ENCODE measurements at regions of chr6 and their contacts with region 1.

Region 1: DNA sequence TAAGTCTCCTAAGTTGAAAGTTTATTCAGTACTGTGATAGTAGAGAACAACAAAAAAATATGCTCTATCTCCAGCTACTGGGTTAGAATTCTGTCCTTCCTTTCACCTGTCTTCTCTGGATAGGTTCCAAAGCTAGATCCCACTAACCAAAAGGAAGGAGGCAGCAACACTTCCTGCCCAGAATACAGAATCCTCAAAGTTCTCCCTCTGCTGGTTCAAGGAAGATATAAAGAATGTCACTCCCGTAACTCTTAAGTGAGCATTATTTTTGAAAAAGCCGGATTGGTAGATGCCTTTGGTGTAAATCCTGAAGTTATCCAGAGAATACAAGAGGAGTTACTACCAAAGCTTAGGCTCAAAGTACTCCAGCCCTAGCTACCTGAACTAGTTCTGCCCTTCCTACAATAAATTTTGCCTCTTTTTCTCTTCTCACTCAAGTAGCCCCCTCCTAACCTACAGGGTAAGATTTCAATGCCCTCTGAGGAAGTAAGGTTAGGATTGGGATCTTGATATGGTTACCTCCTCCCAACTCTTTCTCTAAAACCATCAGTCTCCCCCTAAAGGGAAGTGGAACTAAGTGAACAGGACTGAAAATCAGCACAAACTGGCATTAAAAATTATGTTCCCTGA is 26.0 kb upstream of the CRIP3 start:
- DNase-seq: peak; percentile 12
- H3K4me3 ChIP-seq: no peak overlapping the region
- H3K27me3 ChIP-seq: no peaks in the 10 kb centered on the region
- CTCF ChIP-seq: peak; percentile 68

Region 2: GRCh38 chr6:42618686-42619085 is 715.9 kb before region 1 on chr6:
- CTCF ChIA-PET with region 1: no interaction called
- POLR2A ChIA-PET with region 1: no interaction called
- DNase-seq: peak; percentile 43
- H3K4me3 ChIP-seq: no peak overlapping the region
- H3K27me3 ChIP-seq: no peaks in the 10 kb centered on the region
- CTCF ChIP-seq: no peak

Region 3: DNA sequence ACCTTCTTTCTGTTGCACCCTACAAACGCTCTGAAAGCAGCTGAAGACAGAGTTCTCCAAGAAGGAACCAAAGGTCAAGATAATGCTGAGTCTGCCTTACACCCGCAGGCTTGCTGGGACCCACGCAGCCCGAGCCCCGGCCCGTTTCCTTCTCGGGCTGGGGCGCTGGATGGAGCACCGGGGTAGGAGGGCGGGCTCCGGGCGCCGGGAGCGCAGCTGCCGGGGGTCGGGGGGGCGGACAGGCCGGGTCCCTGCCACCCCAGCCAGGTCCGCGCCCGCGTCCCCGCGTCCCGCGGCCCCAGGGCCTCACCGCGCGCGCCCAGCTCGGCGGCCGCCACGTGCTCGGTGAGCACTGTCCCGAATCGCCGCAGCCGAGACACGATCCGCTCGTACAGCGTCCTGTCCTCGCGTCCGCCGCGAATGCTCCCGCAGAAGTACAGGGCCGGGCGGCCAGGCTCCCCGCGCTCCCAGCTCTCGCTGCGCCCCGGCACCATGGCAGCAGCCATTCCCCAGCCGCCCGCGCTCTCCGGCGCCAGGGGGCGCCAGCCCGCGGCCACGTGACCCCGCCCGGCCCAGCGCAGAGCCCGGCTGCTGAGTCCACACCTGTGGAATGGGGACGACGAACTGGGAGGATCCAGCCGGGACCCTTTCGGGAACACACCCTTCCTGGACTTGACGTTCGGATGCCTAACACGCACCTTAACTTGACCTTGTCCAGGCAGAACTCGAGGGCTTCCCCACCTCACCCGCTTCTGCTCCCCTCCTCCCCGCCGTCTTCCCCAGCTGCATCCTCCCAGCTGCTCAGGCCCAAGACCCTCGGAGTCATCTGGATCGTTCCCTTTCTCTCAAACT is 105.4 kb before region 1 on chr6 and contains the start of gene DNPH1:
- CTCF ChIA-PET with region 1: interaction called, 10 read pairs
- POLR2A ChIA-PET with region 1: no interaction called
- DNase-seq: no peak
- H3K4me3 ChIP-seq: peak within 1 kb of the TSS; percentile 49
- H3K27me3 ChIP-seq: peaks cover 2% of the 10 kb centered on the region; the same call in 1 of the 2 replicates
- CTCF ChIP-seq: peak; percentile 47
- polyA plus RNA-seq, gene DNPH1: 48.6 and 63.9 TPM in 2 replicates

Region 4: GRCh38 chr6:43263314-43264178 is 71.0 kb before region 1 on chr6:
- CTCF ChIA-PET with region 1: interaction called, 51 read pairs
- POLR2A ChIA-PET with region 1: no interaction called
- DNase-seq: no peak
- H3K4me3 ChIP-seq: no peak overlapping the region
- H3K27me3 ChIP-seq: peaks cover 16% of the 10 kb centered on the region
- CTCF ChIP-seq: peak; percentile 88

Region 5: DNA sequence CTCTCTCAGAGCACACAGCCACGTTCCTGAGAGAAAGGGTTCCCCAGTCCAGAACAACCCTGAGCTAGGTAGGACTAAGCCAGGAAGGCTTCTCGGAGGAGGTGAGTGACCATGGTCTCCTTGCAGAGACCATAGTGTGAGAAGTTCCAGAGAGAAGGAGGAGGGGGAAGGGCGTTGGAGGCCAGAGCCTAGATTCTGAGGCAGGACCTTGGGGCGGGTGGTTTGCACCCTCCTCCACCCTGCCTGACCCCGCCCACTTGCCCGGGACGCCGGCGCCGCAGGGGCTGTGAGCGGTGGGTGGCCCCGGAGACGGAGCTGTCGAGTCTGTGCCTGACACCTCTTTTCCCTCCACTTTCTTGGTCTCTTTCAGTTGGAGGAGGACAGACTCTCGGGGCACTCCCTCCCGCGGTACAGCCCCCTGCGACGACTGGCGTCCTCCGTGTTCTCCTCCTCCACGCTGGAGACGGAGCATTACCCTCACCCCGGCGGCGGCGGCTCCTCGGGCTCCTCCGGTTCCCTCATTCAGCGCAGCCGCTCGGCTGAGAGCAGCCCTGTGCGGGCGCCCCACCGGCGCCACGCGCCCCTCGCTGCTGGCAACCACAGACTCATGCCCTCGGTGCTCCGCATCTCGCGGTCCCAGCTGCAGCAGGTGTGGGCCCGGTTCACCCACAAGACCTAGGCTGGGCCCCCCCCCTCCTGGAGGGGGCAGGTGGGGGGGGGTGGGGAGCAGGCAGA is 65.1 kb before region 1 on chr6:
- CTCF ChIA-PET with region 1: interaction called, 51 read pairs
- POLR2A ChIA-PET with region 1: no interaction called
- DNase-seq: no peak
- H3K4me3 ChIP-seq: peak overlapping the region; percentile 19
- H3K27me3 ChIP-seq: peaks cover 36% of the 10 kb centered on the region
- CTCF ChIP-seq: no peak

Region 6: GRCh38 chr6:43302126-43302525 is 32.5 kb before region 1 on chr6:
- CTCF ChIA-PET with region 1: no interaction called
- POLR2A ChIA-PET with region 1: no interaction called
- DNase-seq: no peak
- H3K4me3 ChIP-seq: no peak overlapping the region
- H3K27me3 ChIP-seq: peaks cover 21% of the 10 kb centered on the region
- CTCF ChIP-seq: no peak

Region 7: GRCh38 chr6:43318011-43318410 is 16.6 kb before region 1 on chr6:
- CTCF ChIA-PET with region 1: interaction called, 14 read pairs
- POLR2A ChIA-PET with region 1: no interaction called
- DNase-seq: no peak
- H3K4me3 ChIP-seq: no peak overlapping the region
- H3K27me3 ChIP-seq: no peaks in the 10 kb centered on the region; the same call in 1 of the 2 replicates
- CTCF ChIP-seq: no peak

Region 8: DNA sequence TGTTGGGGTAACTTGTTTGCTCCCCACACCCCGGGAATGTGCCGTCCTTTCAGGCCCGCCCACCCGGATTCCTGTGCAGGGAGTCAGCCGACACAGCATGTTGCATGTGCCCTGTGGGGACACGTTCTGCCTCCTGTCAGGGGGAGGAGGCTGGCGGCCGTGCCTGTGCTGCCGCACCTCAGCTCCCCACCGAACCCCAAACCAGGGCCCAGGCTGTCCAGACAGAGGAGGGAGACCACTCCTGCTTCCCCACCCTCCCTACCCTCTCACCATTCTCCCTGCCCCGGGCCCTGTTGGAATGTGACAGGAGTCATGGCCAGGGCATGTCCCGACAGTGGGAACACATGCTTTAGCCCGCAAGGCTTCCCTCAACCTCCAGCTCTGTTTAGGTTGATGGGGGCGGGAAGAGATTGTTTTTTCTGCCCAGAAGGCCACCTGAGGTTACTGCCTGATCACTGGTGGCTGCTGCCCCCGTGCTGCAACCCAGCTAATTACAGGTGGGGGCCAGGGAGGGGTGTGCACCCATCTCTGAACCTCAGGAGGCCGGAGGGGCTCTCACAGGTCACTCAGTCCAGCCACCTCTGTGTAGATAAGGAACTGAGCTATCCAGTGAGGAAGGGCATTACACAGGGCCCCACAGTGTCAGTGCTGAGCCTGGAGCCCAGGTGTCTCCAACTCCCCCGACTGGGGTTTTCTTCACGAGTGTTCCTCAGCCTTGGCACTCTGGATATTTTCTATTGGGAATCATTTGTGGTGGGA is 162.0 kb after region 1 on chr6:
- CTCF ChIA-PET with region 1: interaction called, 10 read pairs
- POLR2A ChIA-PET with region 1: no interaction called
- DNase-seq: no peak
- H3K4me3 ChIP-seq: no peak overlapping the region
- H3K27me3 ChIP-seq: no peaks in the 10 kb centered on the region
- CTCF ChIP-seq: peak; percentile 76